B cell (primary cell): ENCODE measurements at regions of chr4 and their contacts with region 1.

Region 1: GRCh38 chr4:56424697-56425514 is 10.5 kb downstream of the PPAT start:
- DNase-seq: peak; percentile 67
- ATAC-seq: no peak
- H3K4me3 ChIP-seq: no peak overlapping the region
- H3K4me3 Mint-ChIP-seq: no peak overlapping the region
- H3K27ac ChIP-seq: no peak overlapping the region
- H3K27ac Mint-ChIP-seq: no peak overlapping the region
- H3K4me1 ChIP-seq: no peaks in the 10 kb centered on the region
- H3K4me1 Mint-ChIP-seq: peaks cover 9% of the 10 kb centered on the region
- H3K27me3 ChIP-seq: no peaks in the 10 kb centered on the region
- H3K27me3 Mint-ChIP-seq: no peaks in the 10 kb centered on the region
- CTCF ChIP-seq: peak; percentile 85

Region 2: GRCh38 chr4:56405016-56405415 is 19.9 kb before region 1 on chr4:
- CTCF ChIA-PET with region 1: interaction called, 14 read pairs
- POLR2A ChIA-PET with region 1: no interaction called
- intact Hi-C with region 1: no loop called
- DNase-seq: no peak
- ATAC-seq: no peak
- H3K4me3 ChIP-seq: no peak overlapping the region
- H3K4me3 Mint-ChIP-seq: no peak overlapping the region
- H3K27ac ChIP-seq: no peak overlapping the region
- H3K27ac Mint-ChIP-seq: no peak overlapping the region
- H3K4me1 ChIP-seq: no peaks in the 10 kb centered on the region
- H3K4me1 Mint-ChIP-seq: no peaks in the 10 kb centered on the region
- H3K27me3 ChIP-seq: no peaks in the 10 kb centered on the region
- H3K27me3 Mint-ChIP-seq: no peaks in the 10 kb centered on the region
- CTCF ChIP-seq: no peak

Region 3: GRCh38 chr4:56496241-56496640 is 71.3 kb after region 1 on chr4:
- CTCF ChIA-PET with region 1: no interaction called
- POLR2A ChIA-PET with region 1: no interaction called
- intact Hi-C with region 1: no loop called
- DNase-seq: no peak
- ATAC-seq: no peak
- H3K4me3 ChIP-seq: no peak overlapping the region
- H3K4me3 Mint-ChIP-seq: no peak overlapping the region
- H3K27ac ChIP-seq: no peak overlapping the region
- H3K27ac Mint-ChIP-seq: no peak overlapping the region
- H3K4me1 ChIP-seq: no peaks in the 10 kb centered on the region
- H3K4me1 Mint-ChIP-seq: no peaks in the 10 kb centered on the region
- H3K27me3 ChIP-seq: no peaks in the 10 kb centered on the region
- H3K27me3 Mint-ChIP-seq: no peaks in the 10 kb centered on the region
- CTCF ChIP-seq: no peak

Region 4: DNA sequence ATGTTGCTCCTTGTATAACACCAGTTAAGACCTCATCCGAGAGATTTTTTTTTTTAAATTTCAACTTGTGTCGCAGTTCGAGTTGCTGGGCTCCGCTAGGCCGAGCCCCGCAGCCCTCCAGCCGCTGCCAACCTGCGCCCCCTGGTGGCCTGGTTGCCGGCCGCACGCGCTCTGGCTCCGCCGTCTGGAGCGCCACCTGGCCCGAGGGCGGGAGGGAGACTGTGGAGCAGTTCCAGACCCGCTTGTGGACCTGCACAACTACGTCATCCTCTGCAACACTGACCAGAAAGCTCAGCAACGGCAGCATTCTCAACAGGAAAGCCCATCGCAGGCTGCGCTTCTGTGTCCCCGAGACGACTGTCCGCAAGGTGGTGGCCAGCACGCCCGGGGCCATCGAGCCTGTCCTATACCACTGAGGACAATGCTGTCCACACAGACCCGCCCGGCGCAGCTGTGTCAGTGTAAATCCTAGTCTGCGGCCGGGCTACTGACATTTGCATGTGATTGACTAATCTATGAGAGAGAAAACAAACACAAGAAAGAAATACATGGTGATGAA is 119.7 kb after region 1 on chr4:
- CTCF ChIA-PET with region 1: interaction called, 29 read pairs
- POLR2A ChIA-PET with region 1: no interaction called
- intact Hi-C with region 1: loop called (anchors 1 kb)
- DNase-seq: peak; percentile 88
- ATAC-seq: peak; percentile 100
- H3K4me3 ChIP-seq: peak overlapping the region in 4 of 5 experiments; percentile 17 to 45 (median 38)
- H3K4me3 Mint-ChIP-seq: peak overlapping the region; percentile 77
- H3K27ac ChIP-seq: no peak overlapping the region
- H3K27ac Mint-ChIP-seq: peak overlapping the region; percentile 53
- H3K4me1 ChIP-seq: peaks cover 7% of the 10 kb centered on the region in 2 donors
- H3K4me1 Mint-ChIP-seq: peaks cover 12% of the 10 kb centered on the region
- H3K27me3 ChIP-seq: peaks cover 0 to 5% (median 3%) of the 10 kb centered on the region in 4 experiments
- H3K27me3 Mint-ChIP-seq: peaks cover 13% of the 10 kb centered on the region
- CTCF ChIP-seq: peak; percentile 99

Region 5: GRCh38 chr4:56655209-56655626 is 230.3 kb after region 1 on chr4:
- CTCF ChIA-PET with region 1: interaction called, 3 read pairs
- POLR2A ChIA-PET with region 1: no interaction called
- intact Hi-C with region 1: loop called (anchors 5 kb)
- DNase-seq: peak; percentile 61
- ATAC-seq: peak; percentile 29
- H3K4me3 ChIP-seq: peak overlapping the region in 4 of 5 experiments; percentile 59 to 72 (median 68)
- H3K4me3 Mint-ChIP-seq: peak overlapping the region; percentile 96
- H3K27ac ChIP-seq: no peak overlapping the region
- H3K27ac Mint-ChIP-seq: peak overlapping the region; percentile 73
- H3K4me1 ChIP-seq: peaks cover 45 to 52% of the 10 kb centered on the region in 2 donors
- H3K4me1 Mint-ChIP-seq: peaks cover 63% of the 10 kb centered on the region
- H3K27me3 ChIP-seq: peaks cover 0 to 20% (median 2%) of the 10 kb centered on the region in 4 experiments
- H3K27me3 Mint-ChIP-seq: peaks cover 7% of the 10 kb centered on the region
- CTCF ChIP-seq: no peak

Region 6: GRCh38 chr4:56843421-56843899 is 418.6 kb after region 1 on chr4:
- CTCF ChIA-PET with region 1: interaction called, 130 read pairs
- POLR2A ChIA-PET with region 1: no interaction called
- intact Hi-C with region 1: no loop called
- DNase-seq: no peak
- ATAC-seq: no peak
- H3K4me3 ChIP-seq: no peak overlapping the region
- H3K4me3 Mint-ChIP-seq: no peak overlapping the region
- H3K27ac ChIP-seq: no peak overlapping the region
- H3K27ac Mint-ChIP-seq: no peak overlapping the region
- H3K4me1 ChIP-seq: no peaks in the 10 kb centered on the region
- H3K4me1 Mint-ChIP-seq: no peaks in the 10 kb centered on the region
- H3K27me3 ChIP-seq: no peaks in the 10 kb centered on the region
- H3K27me3 Mint-ChIP-seq: peaks cover 3% of the 10 kb centered on the region
- CTCF ChIP-seq: no peak